Activated CD8-positive, alpha-beta T cell treated with anti-CD3 and anti-CD28 coated beads, Interleukin-2, amount 10 ng/mL, durations not matched to agents 7 days and 5 days (primary cell): ENCODE measurements at regions of chr4 and their contacts with region 1.

Region 1: DNA sequence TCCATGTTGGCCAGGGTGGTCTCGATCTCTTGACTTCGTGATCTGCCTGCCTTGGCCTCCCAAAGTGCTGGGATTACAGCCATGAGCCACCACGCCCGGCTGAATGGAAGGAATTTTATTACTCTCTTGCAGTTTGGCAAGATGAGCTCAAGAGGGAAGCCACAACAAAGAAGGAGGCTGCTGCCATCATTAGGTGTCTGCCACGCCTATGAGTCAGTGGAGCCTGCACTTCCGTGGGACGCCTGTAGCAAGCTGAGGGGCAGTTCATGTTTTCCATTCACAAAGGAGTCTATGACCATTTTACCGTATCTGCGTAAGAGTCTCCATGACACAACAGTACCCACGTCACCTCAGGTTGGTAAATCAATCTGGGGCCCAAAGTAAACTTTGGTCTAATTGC is 51.2 kb upstream of the CHRNA9 start:
- DNase-seq: peak; percentile 88
- ATAC-seq: peak; percentile 89
- H3K4me3 Mint-ChIP-seq: peak overlapping the region; percentile 37
- H3K27ac Mint-ChIP-seq: peak overlapping the region; percentile 87
- H3K4me1 Mint-ChIP-seq: peaks cover 56% of the 10 kb centered on the region
- H3K27me3 Mint-ChIP-seq: no peaks in the 10 kb centered on the region

Region 2: GRCh38 chr4:40046311-40046980 is 237.5 kb before region 1 on chr4:
- CTCF ChIA-PET with region 1: no interaction called
- POLR2A ChIA-PET with region 1: no interaction called
- DNase-seq: no peak
- ATAC-seq: peak; percentile 79
- H3K4me3 Mint-ChIP-seq: no peak overlapping the region
- H3K27ac Mint-ChIP-seq: peak overlapping the region; percentile 49
- H3K4me1 Mint-ChIP-seq: peaks cover 5% of the 10 kb centered on the region
- H3K27me3 Mint-ChIP-seq: no peaks in the 10 kb centered on the region

Region 3: DNA sequence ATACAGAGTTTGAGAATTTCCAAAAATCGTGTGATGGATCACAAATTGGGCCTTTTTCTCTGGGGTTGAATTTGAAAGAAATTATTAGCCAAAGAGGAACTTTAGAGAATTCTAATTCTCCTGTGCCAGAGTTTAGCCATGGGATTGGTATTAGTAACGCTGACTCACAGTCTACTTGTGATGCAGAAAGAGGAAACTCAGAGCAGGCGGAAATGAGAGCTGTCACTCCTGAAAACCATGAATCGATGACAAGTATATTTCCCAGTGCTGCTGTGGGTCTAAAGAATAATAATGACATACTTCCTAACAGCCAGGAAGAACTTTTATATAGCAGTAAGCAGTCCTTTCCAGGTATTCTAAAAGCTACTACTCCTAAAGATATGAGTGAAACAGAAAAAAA is 162.5 kb before region 1 on chr4:
- CTCF ChIA-PET with region 1: no interaction called
- POLR2A ChIA-PET with region 1: no interaction called
- DNase-seq: peak; percentile 25
- ATAC-seq: no peak
- H3K4me3 Mint-ChIP-seq: no peak overlapping the region
- H3K27ac Mint-ChIP-seq: peak overlapping the region; percentile 10
- H3K4me1 Mint-ChIP-seq: peaks cover 33% of the 10 kb centered on the region
- H3K27me3 Mint-ChIP-seq: no peaks in the 10 kb centered on the region

Region 4: DNA sequence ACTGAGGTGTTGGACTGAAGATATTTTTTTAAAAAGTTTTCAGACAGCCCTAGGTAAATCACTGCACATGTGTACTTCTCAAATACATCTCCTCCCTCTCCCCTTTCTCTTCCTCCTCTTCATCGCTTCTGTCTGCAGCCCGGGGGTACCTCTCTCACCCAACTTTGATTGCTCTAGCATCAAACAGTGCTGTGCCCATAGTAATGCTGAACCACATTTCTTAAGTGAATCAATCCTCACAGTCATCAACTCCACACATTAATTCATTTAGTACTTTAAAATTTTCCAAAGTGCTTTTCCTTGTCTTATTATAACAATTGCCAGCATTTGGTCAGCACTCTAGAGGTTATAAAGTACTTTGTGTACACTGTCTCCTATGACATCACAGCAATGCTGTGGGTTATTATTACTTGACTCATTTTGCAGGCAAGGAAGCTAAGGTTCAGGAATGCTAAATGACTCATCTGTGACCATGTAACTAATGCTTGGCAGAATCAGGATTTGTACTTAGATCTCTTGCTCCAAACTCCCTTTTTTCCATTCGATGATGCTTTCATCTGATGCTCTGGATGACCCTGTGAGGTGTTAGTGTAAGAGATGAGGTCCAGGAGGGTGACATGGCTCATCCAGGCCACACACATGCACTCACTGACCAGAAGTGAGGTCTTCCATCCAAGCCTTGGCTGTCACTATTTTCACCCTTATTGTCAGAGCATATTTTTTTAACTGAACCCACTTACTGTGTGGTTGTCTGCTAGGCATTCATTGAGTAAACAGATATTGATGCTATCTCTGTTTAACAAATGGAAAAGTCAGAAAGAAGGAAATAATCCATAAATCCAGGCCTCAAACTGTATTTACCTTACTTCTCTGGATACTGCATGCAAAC is 28.3 kb before region 1 on chr4:
- CTCF ChIA-PET with region 1: interaction called, 11 read pairs
- POLR2A ChIA-PET with region 1: interaction called, 3 read pairs
- DNase-seq: no peak
- ATAC-seq: peak; percentile 27
- H3K4me3 Mint-ChIP-seq: peak overlapping the region; percentile 47
- H3K27ac Mint-ChIP-seq: peak overlapping the region; percentile 89
- H3K4me1 Mint-ChIP-seq: peaks cover 71% of the 10 kb centered on the region
- H3K27me3 Mint-ChIP-seq: no peaks in the 10 kb centered on the region

Region 5: GRCh38 chr4:40301603-40302002 is 17.6 kb after region 1 on chr4:
- CTCF ChIA-PET with region 1: interaction called, 36 read pairs
- POLR2A ChIA-PET with region 1: interaction called, 24 read pairs
- DNase-seq: peak; percentile 83
- ATAC-seq: peak; percentile 81
- H3K4me3 Mint-ChIP-seq: peak overlapping the region; percentile 68
- H3K27ac Mint-ChIP-seq: peak overlapping the region; percentile 92
- H3K4me1 Mint-ChIP-seq: peaks cover 80% of the 10 kb centered on the region
- H3K27me3 Mint-ChIP-seq: no peaks in the 10 kb centered on the region

Region 6: GRCh38 chr4:40438384-40439026 is 154.5 kb after region 1 on chr4:
- CTCF ChIA-PET with region 1: no interaction called
- POLR2A ChIA-PET with region 1: no interaction called
- DNase-seq: no peak
- ATAC-seq: no peak
- H3K4me3 Mint-ChIP-seq: no peak overlapping the region
- H3K27ac Mint-ChIP-seq: peak overlapping the region; percentile 71
- H3K4me1 Mint-ChIP-seq: peaks cover 65% of the 10 kb centered on the region
- H3K27me3 Mint-ChIP-seq: no peaks in the 10 kb centered on the region